Natural killer cell (primary cell): ENCODE measurements at regions of chr2 and their contacts with region 1.

Region 1: GRCh38 chr2:160406591-160407392 is 86.8 kb downstream of the RBMS1 start:
- DNase-seq: peak; percentile 69 to 96
- ATAC-seq: peak; percentile 75 to 89 (median 78)
- H3K4me3 ChIP-seq: peak overlapping the region; percentile 75
- H3K4me3 Mint-ChIP-seq: peak overlapping the region; percentile 90
- H3K27ac ChIP-seq: peak overlapping the region; percentile 84
- H3K27ac Mint-ChIP-seq: peak overlapping the region; percentile 94 to 98
- H3K4me1 ChIP-seq: peaks cover 46% of the 10 kb centered on the region
- H3K4me1 Mint-ChIP-seq: peaks cover 77 to 79% of the 10 kb centered on the region in 2 donors
- H3K27me3 ChIP-seq: no peaks in the 10 kb centered on the region
- H3K27me3 Mint-ChIP-seq: no peaks in the 10 kb centered on the region
- CTCF ChIP-seq: no peak

Region 2: GRCh38 chr2:160353166-160353565 is 53.6 kb before region 1 on chr2:
- intact Hi-C with region 1: loop called (anchors 10 kb)
- DNase-seq: peak in 1 of 2 donors; percentile 67
- ATAC-seq: peak; percentile 71 to 82 (median 77)
- H3K4me3 ChIP-seq: no peak overlapping the region
- H3K4me3 Mint-ChIP-seq: no peak overlapping the region
- H3K27ac ChIP-seq: no peak overlapping the region
- H3K27ac Mint-ChIP-seq: peak overlapping the region; percentile 71 to 79
- H3K4me1 ChIP-seq: no peaks in the 10 kb centered on the region
- H3K4me1 Mint-ChIP-seq: peaks cover 82% of the 10 kb centered on the region in 2 donors
- H3K27me3 ChIP-seq: no peaks in the 10 kb centered on the region
- H3K27me3 Mint-ChIP-seq: no peaks in the 10 kb centered on the region
- CTCF ChIP-seq: peak; percentile 48

Region 3: DNA sequence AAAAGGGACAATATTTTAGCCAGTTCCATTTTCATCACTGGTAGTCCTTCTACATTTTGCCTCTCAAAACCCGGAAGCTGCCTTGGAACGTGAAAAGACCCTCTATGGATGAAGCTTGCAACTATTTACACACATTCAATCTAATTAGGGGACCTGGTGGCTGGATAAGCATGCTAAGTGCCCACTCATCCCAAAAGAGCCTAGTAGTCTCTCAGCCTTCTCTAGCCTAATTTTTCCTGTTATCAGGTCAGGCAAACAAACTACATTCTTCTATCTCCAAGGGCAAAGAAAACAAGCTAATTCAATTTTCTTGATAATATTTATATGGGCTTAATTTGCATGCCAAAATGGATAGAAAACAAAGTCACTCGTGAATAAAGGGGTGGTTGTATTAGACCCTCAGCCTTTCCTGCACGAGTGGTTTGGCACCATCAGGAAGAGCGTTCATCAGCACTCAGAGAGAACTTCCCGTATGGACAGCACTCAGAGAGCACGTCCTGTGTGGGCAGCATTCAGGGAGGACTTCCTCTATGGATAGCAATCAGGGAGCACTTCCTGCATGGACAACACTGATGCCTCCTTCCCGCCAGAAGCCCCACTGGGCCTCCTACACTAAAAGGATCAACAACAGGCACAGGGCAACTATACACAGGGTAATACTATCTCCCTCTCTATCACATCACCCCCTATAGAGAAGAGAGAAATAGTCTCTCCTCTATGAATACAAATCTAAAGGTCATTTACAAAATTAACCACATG is 35.4 kb before region 1 on chr2:
- intact Hi-C with region 1: loop called (anchors 5 kb)
- DNase-seq: no peak
- ATAC-seq: peak; percentile 17 to 28 (median 26)
- H3K4me3 ChIP-seq: no peak overlapping the region
- H3K4me3 Mint-ChIP-seq: peak overlapping the region; percentile 59
- H3K27ac ChIP-seq: no peak overlapping the region
- H3K27ac Mint-ChIP-seq: peak overlapping the region; percentile 72 to 86
- H3K4me1 ChIP-seq: peaks cover 60% of the 10 kb centered on the region
- H3K4me1 Mint-ChIP-seq: peaks cover 79 to 88% of the 10 kb centered on the region in 2 donors
- H3K27me3 ChIP-seq: no peaks in the 10 kb centered on the region
- H3K27me3 Mint-ChIP-seq: no peaks in the 10 kb centered on the region
- CTCF ChIP-seq: no peak

Region 4: DNA sequence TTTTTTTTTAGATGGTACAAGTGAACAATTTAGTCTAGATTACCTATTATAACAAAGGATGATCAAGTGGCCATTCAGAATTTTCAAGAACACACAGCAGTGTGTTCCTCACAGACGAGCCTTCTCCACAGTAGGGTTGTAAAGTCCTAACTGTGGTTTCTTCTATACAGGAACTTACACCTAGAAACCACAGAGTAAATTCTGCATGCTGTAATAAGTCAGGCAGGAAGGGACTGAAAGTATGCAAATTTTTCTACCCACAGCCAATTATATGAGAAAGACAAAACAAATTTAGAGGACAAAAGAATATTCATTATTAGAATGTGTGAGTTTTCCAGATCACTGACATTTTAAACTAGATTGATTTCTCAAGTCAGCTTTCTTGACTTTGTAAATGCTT is 12.6 kb before region 1 on chr2:
- intact Hi-C with region 1: loop called (anchors 1 kb)
- DNase-seq: peak in 1 of 2 donors; percentile 73
- ATAC-seq: peak; percentile 89 to 97 (median 92)
- H3K4me3 ChIP-seq: no peak overlapping the region
- H3K4me3 Mint-ChIP-seq: peak overlapping the region; percentile 71
- H3K27ac ChIP-seq: peak overlapping the region; percentile 46
- H3K27ac Mint-ChIP-seq: no peak overlapping the region
- H3K4me1 ChIP-seq: peaks cover 60% of the 10 kb centered on the region
- H3K4me1 Mint-ChIP-seq: peaks cover 59 to 64% of the 10 kb centered on the region in 2 donors
- H3K27me3 ChIP-seq: no peaks in the 10 kb centered on the region
- H3K27me3 Mint-ChIP-seq: no peaks in the 10 kb centered on the region
- CTCF ChIP-seq: no peak

Region 5: GRCh38 chr2:160429248-160430000 is 22.6 kb after region 1 on chr2:
- intact Hi-C with region 1: loop called (anchors 1 kb)
- DNase-seq: peak in 1 of 2 donors; percentile 80
- ATAC-seq: peak; percentile 60 to 64 (median 62)
- H3K4me3 ChIP-seq: no peak overlapping the region
- H3K4me3 Mint-ChIP-seq: peak overlapping the region; percentile 66
- H3K27ac ChIP-seq: peak overlapping the region; percentile 80
- H3K27ac Mint-ChIP-seq: peak overlapping the region; percentile 93 to 95
- H3K4me1 ChIP-seq: peaks cover 6% of the 10 kb centered on the region
- H3K4me1 Mint-ChIP-seq: peaks cover 33 to 36% of the 10 kb centered on the region in 2 donors
- H3K27me3 ChIP-seq: no peaks in the 10 kb centered on the region
- H3K27me3 Mint-ChIP-seq: no peaks in the 10 kb centered on the region
- CTCF ChIP-seq: peak; percentile 74

Region 6: GRCh38 chr2:160472839-160473251 is 66.1 kb after region 1 on chr2:
- intact Hi-C with region 1: no loop called
- DNase-seq: no peak
- ATAC-seq: no peak
- H3K4me3 ChIP-seq: no peak overlapping the region
- H3K4me3 Mint-ChIP-seq: no peak overlapping the region
- H3K27ac ChIP-seq: no peak overlapping the region
- H3K27ac Mint-ChIP-seq: no peak overlapping the region
- H3K4me1 ChIP-seq: no peaks in the 10 kb centered on the region
- H3K4me1 Mint-ChIP-seq: no peaks in the 10 kb centered on the region
- H3K27me3 ChIP-seq: no peaks in the 10 kb centered on the region
- H3K27me3 Mint-ChIP-seq: peaks cover 2 to 7% of the 10 kb centered on the region in 2 donors
- CTCF ChIP-seq: no peak